SK-N-SH (cell line): ENCODE measurements at regions of chr10 and their contacts with region 1.

Region 1: DNA sequence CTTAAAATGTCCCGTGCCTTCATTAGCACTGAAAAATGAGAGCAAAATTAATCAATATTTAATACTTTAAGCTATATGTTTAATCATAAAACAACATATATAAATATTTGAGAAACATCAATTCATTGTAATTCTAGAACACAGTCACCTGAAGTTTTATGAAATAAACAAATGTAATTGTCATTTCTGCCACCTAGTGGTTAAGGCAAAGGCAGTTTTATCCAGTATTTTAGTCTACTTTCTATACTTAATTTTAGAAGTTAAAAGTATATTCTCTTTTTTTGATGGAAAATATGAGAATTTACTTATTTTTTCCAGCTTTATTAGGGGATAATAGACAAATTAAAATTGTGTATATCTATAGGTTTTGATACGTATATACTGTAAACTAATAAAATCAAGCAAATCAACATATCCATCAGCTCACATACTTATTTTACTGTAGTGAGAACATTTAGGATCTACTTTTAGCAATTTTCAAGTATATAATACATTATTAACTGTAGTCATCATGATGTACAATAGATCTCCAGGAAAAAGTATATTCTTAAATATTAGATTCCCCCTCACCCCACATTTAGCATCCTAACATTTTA is 16.9 kb downstream of the PCGF6 start:
- DNase-seq: peak; percentile 42
- H3K4me3 ChIP-seq: no peak overlapping the region; a peak in 1 of 4 replicates
- H3K27ac ChIP-seq: 0 out of 4 replicates have a peak overlapping the region, but pooled peaks of 1 of the 2 experiments have one; percentile 15
- H3K4me1 ChIP-seq: no peaks in the 10 kb centered on the region
- H3K27me3 ChIP-seq: no peaks in the 10 kb centered on the region
- CTCF ChIP-seq: peak; percentile 83
- EP300 ChIP-seq: no peak
- RAD21 ChIP-seq: peak; percentile 58

Region 2: GRCh38 chr10:103278862-103279298 is 55.1 kb before region 1 on chr10:
- CTCF ChIA-PET with region 1: interaction called, 10 read pairs
- POLR2A ChIA-PET with region 1: interaction called, 3 read pairs
- DNase-seq: no peak
- H3K4me3 ChIP-seq: peak overlapping the region in 1 of 2 experiments; percentile 54; a peak in 1 of 4 replicates
- H3K27ac ChIP-seq: no peak overlapping the region
- H3K4me1 ChIP-seq: peaks cover 1 to 22% of the 10 kb centered on the region in 2 experiments
- H3K27me3 ChIP-seq: peaks cover 6% of the 10 kb centered on the region; the same call in 1 of the 2 replicates
- CTCF ChIP-seq: no peak
- EP300 ChIP-seq: no peak
- RAD21 ChIP-seq: no peak

Region 3: DNA sequence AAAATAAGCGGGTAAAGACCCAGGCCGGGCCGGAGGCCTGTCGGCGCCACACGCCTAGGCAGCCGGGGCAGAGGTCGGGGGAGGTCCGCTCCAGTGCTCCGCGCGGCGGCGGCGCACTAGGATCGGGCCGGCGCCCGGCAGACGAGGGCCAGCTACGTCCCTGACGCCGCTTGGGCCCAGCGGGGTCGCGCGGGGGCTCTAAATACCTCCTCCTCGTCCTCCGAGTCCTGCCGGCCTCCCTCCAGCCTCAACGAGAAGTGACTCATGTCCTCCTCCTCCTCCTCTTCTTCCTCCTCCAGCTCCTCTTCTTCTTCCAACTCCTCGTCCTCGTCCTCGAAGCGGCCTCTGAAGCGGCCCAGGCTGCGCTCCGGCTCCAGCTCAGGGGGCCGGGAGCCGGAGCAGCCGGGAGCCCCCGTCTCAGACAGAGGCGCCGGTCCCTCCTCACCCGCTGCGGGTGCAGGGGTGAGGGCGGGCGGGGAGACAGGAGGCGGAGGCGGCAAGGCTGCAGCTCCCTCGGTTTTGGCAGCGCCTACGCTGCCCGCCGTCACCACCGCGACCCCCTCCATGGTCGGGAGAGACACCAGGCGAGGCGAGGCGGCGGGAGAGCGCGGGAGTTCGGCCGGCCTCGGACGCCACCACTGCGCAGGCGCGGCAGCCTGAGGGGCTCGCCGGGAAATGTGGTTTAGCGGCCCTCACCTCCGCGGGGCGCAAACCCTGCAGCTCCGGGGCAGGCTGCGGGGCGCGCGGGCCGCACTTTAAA is 16.7 kb after region 1 on chr10 and contains the start of gene PCGF6:
- CTCF ChIA-PET with region 1: interaction called, 12 read pairs
- POLR2A ChIA-PET with region 1: no interaction called
- DNase-seq: peak; percentile 98
- H3K4me3 ChIP-seq: peak within 1 kb of the TSS; percentile 64 to 89
- H3K27ac ChIP-seq: peak within 1 kb of the TSS; percentile 68 to 71
- H3K4me1 ChIP-seq: no peaks in the 10 kb centered on the region; a peak in 1 of 4 replicates
- H3K27me3 ChIP-seq: no peaks in the 10 kb centered on the region
- CTCF ChIP-seq: 0 out of 2 replicates have a peak, but pooled peaks have one; percentile 16
- EP300 ChIP-seq: 0 out of 4 replicates have a peak, but pooled peaks of 1 of the 2 experiments have one; percentile 15
- RAD21 ChIP-seq: no peak
- polyA plus RNA-seq, gene PCGF6: 5.1 and 5.3 TPM in 2 replicates

Region 4: GRCh38 chr10:104688251-104688650 is 1354.2 kb after region 1 on chr10:
- CTCF ChIA-PET with region 1: no interaction called
- POLR2A ChIA-PET with region 1: no interaction called
- DNase-seq: no peak
- H3K4me3 ChIP-seq: no peak overlapping the region
- H3K27ac ChIP-seq: no peak overlapping the region
- H3K4me1 ChIP-seq: no peaks in the 10 kb centered on the region; a peak in 1 of 4 replicates
- H3K27me3 ChIP-seq: no peaks in the 10 kb centered on the region
- CTCF ChIP-seq: no peak
- EP300 ChIP-seq: no peak
- RAD21 ChIP-seq: no peak